GM12878 (cell line): ENCODE measurements at regions of chr19 and their contacts with region 1.

Region 1: GRCh38 chr19:44988896-44989556 is 12.2 kb upstream of the RELB start:
- DNase-seq: no peak
- ATAC-seq: peak; percentile 90
- H3K4me3 ChIP-seq: no peak overlapping the region
- H3K27ac ChIP-seq: no peak overlapping the region
- H3K4me1 ChIP-seq: peaks cover 12% of the 10 kb centered on the region
- H3K27me3 ChIP-seq: no peaks in the 10 kb centered on the region
- CTCF ChIP-seq: peak; percentile 68 to 87 (median 80)
- EP300 ChIP-seq: no peak
- POLR2A ChIP-seq: no peak
- RAD21 ChIP-seq: peak; percentile 67

Region 2: GRCh38 chr19:45001087-45001739 is 12.2 kb after region 1 on chr19 and contains the start of gene RELB:
- CTCF ChIA-PET with region 1: interaction called, 17 read pairs
- POLR2A ChIA-PET with region 1: interaction called, 24 read pairs
- RAD21 ChIA-PET with region 1: interaction called, 5 read pairs
- SMC1A ChIA-PET with region 1: interaction called, 4 read pairs
- in situ Hi-C with region 1: no loop called
- intact Hi-C with region 1: no loop called
- DNase-seq: peak; percentile 57
- ATAC-seq: peak; percentile 74
- H3K4me3 ChIP-seq: peak within 1 kb of the TSS; percentile 91
- H3K27ac ChIP-seq: peak within 1 kb of the TSS; percentile 92
- H3K4me1 ChIP-seq: peaks cover 3% of the 10 kb centered on the region; the same call in 1 of the 2 replicates
- H3K27me3 ChIP-seq: no peaks in the 10 kb centered on the region
- CTCF ChIP-seq: no peak
- EP300 ChIP-seq: 0 out of 4 replicates have a peak, but pooled peaks have one; percentile 22 to 25
- POLR2A ChIP-seq: peak; percentile 89
- RAD21 ChIP-seq: no peak
- polyA plus RNA-seq, gene RELB: 0.66 to 3.2 TPM

Region 3: DNA sequence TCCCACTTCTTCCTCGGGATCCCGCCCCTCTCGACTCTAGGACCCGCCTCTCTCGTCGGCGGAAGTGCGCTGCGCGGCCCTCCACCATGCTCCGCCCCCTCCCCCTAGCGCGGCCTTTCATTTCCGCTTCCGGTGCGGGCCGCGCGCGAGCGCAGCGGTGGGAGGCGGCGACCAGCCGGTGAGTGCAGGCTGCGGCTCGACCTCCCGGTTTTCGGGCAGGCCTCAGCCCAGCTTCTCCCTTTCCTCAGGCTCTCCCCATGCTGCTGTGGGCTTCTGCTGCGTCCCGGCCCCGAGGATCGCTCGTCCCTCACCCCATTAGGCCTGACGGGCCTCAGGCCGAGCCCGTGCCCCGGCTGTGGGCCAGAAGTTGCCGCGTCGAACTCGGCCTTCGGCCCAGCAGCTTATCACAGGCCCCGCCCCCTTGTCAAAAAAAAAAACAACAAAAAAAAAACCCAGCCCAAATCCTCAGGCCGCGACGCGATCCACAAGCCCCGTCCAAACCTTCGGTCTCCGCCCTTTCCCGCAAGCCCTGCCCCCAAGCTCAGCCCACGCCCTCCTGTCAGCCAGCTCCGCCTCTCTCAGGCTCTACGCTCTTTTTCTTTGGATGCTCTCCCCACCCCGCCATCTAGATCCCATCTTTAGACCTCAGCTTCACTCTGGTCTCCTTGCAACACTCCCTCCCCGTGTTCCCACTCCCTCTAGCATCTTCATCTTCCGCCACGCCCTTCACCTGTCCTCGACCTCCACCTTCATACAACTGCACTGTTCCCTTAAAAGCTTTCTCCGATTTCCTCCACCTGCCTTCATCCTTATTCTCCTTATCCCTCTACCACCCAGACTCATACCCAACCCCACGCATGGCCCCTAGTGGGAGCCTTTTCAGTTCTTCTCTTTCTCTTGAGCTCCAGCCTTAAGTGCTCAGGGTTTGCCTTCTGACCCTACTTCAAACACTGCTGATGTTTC is 50.2 kb after region 1 on chr19 and contains the start of gene CLASRP:
- CTCF ChIA-PET with region 1: interaction called, 14 read pairs
- POLR2A ChIA-PET with region 1: interaction called, 6 read pairs
- RAD21 ChIA-PET with region 1: interaction called, 16 read pairs
- SMC1A ChIA-PET with region 1: interaction called, 3 read pairs
- in situ Hi-C with region 1: no loop called
- intact Hi-C with region 1: no loop called
- DNase-seq: peak; percentile 44
- ATAC-seq: peak; percentile 97
- H3K4me3 ChIP-seq: peak within 1 kb of the TSS; percentile 76
- H3K27ac ChIP-seq: peak within 1 kb of the TSS; percentile 94
- H3K4me1 ChIP-seq: peaks cover 10% of the 10 kb centered on the region
- H3K27me3 ChIP-seq: no peaks in the 10 kb centered on the region
- CTCF ChIP-seq: no peak
- EP300 ChIP-seq: no peak
- POLR2A ChIP-seq: peak; percentile 99
- RAD21 ChIP-seq: no peak
- polyA plus RNA-seq, gene CLASRP: 0.68 to 2.3 TPM

Region 4: DNA sequence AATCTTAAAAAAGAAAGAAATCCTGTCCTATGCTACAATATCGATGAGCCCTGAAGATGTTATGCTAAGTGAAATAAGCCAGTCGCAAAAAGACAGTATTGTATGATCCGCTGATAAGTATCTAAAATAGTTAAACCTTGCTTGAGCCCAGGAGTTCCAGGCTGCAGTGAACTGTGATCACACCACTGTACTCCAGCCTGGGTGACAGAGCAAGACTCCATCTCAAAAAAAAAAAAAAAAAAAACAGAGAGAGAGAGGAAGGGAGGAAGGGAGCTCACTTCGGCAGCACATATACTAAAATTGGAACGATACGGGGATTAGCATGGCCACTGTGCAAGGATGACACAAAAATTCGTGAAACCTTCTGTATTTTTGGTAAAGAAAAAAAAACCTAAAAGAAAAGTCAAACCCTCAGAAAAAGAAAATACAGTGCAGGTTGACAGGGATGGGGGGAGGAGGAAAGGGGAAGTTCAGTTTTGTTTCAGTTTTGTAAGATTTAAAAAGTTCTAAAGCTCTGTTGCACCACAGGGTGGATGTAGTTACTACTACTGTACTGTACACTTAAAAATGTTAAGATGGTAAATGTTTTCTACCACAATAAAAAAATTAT is 58.3 kb after region 1 on chr19:
- CTCF ChIA-PET with region 1: interaction called, 10 read pairs
- POLR2A ChIA-PET with region 1: no interaction called
- RAD21 ChIA-PET with region 1: interaction called, 11 read pairs
- SMC1A ChIA-PET with region 1: interaction called, 12 read pairs
- in situ Hi-C with region 1: no loop called
- intact Hi-C with region 1: no loop called
- DNase-seq: peak; percentile 34
- ATAC-seq: peak; percentile 93
- H3K4me3 ChIP-seq: peak overlapping the region; percentile 48
- H3K27ac ChIP-seq: peak overlapping the region; percentile 67
- H3K4me1 ChIP-seq: peaks cover 36% of the 10 kb centered on the region
- H3K27me3 ChIP-seq: no peaks in the 10 kb centered on the region
- CTCF ChIP-seq: peak in 1 of 3 experiments; percentile 44; a peak in 1 of 6 replicates
- EP300 ChIP-seq: no peak
- POLR2A ChIP-seq: no peak
- RAD21 ChIP-seq: no peak; the same call in 1 of the 2 replicates

Region 5: GRCh38 chr19:45125926-45126493 is 137.0 kb after region 1 on chr19:
- CTCF ChIA-PET with region 1: interaction called, 12 read pairs
- POLR2A ChIA-PET with region 1: no interaction called
- RAD21 ChIA-PET with region 1: no interaction called
- SMC1A ChIA-PET with region 1: interaction called, 3 read pairs
- in situ Hi-C with region 1: no loop called
- intact Hi-C with region 1: no loop called
- DNase-seq: no peak
- ATAC-seq: peak; percentile 95
- H3K4me3 ChIP-seq: no peak overlapping the region
- H3K27ac ChIP-seq: no peak overlapping the region
- H3K4me1 ChIP-seq: peaks cover 21% of the 10 kb centered on the region
- H3K27me3 ChIP-seq: no peaks in the 10 kb centered on the region
- CTCF ChIP-seq: peak; percentile 79 to 93 (median 83)
- EP300 ChIP-seq: no peak
- POLR2A ChIP-seq: peak; percentile 28; the same call in 1 of the 2 replicates
- RAD21 ChIP-seq: peak; percentile 76